ENCODE measurements at regions of chr1 and their contacts with region 1.

Region 1: DNA sequence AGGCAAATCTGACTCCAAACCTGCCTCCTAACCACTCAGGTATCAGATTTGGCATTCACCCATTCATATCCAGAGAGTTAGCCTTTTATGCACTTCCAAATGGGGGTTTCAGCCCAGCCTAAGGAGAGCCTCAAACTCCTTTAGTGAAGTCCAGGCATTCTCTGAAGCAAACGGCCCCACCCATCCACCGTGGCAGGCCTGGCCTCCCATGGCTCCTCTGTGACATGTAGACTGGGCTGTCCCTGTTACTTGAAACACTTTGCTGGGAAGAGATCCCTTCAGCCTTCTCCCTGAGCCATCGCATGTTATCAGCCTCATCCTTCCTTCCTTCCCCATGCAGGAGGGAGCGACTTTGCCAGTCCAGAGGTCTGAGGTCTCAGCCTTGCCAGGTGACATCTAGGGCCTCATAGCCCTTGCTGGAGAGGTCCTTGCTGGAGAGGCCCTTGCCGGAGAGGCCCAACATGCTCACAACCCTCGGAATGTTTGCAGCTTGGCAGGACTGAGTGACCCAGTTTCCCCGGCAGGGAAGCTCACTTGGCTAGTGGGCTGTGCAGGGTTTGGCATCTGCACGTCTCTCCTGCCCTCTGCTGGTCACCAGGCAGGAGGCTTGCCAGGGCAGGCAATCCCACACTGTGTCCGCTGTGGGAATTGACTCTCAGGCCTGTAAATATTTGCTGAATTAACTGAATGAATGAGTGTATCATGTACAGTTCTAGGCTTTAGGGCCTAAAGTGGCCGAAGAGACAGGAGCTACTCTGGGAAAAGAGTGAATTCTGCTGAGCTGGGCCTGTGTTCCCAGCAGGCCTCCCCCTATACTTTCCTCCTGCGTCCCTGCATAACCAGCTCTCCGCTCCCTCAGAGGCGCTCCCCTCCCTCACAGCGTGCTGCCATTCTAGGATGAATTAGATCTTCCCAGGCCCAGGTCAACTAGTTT is 26.7 kb upstream of the RBM15 start:
- DNase-seq: peak; percentile 19
- ATAC-seq: peak; percentile 100
- H3K4me3 ChIP-seq: no peak overlapping the region
- H3K27ac ChIP-seq: no peak overlapping the region
- H3K4me1 ChIP-seq: no peaks in the 10 kb centered on the region
- H3K27me3 ChIP-seq: no peaks in the 10 kb centered on the region
- CTCF ChIP-seq: peak; percentile 93
- EP300 ChIP-seq: no peak
- POLR2A ChIP-seq: no peak
- RAD21 ChIP-seq: peak; percentile 97

Region 2: DNA sequence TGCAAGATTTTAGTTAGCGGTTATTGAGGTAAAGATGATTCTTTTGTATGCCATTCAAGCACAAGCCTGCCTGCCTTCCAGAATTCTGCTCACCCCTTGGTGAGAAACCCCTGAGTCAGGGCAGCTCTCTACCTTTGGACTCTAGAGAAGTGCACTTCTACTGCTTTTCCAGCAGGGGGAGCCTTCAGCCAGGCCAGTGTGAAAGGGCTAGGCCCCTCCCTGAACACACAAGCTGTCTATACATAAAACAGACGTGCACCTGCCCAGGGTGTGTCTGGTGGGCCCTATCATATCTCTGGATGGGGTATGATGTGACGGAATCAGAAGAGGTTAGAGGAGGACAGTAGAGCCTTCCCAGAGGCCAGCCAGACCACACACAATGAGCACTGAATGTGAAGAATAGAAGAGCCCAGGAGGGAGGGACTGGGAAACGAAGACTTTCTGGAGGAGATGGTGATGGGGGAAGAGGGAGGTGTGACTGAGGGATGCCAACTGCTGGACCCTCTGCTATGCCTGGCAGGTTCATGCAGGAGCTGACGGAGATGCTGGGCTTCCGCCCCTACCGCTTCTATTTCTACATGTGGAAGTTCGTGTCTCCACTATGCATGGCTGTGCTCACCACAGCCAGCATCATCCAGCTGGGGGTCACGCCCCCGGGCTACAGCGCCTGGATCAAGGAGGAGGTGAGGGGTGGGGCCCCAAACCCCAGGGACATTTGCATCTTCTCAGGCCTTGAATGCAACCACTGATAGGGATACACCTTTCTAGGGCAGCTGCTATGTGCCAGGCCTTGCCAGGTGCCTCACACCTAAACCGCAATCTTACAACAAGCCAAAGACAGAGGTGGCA is 115.3 kb before region 1 on chr1:
- CTCF ChIA-PET with region 1: interaction called, 753 read pairs
- POLR2A ChIA-PET with region 1: no interaction called
- RAD21 ChIA-PET with region 1: interaction called, 51 read pairs
- SMC1A ChIA-PET with region 1: interaction called, 524 read pairs
- in situ Hi-C with region 1: loop called (anchors 5 kb)
- intact Hi-C with region 1: no loop called
- DNase-seq: no peak
- ATAC-seq: peak; percentile 98
- H3K4me3 ChIP-seq: no peak overlapping the region
- H3K27ac ChIP-seq: no peak overlapping the region
- H3K4me1 ChIP-seq: no peaks in the 10 kb centered on the region
- H3K27me3 ChIP-seq: peaks cover 0 to 2% of the 10 kb centered on the region in 2 experiments; a peak in 2 of 4 replicates
- CTCF ChIP-seq: peak; percentile 87 to 92 (median 91)
- EP300 ChIP-seq: no peak
- POLR2A ChIP-seq: no peak
- RAD21 ChIP-seq: peak; percentile 61

Region 3: DNA sequence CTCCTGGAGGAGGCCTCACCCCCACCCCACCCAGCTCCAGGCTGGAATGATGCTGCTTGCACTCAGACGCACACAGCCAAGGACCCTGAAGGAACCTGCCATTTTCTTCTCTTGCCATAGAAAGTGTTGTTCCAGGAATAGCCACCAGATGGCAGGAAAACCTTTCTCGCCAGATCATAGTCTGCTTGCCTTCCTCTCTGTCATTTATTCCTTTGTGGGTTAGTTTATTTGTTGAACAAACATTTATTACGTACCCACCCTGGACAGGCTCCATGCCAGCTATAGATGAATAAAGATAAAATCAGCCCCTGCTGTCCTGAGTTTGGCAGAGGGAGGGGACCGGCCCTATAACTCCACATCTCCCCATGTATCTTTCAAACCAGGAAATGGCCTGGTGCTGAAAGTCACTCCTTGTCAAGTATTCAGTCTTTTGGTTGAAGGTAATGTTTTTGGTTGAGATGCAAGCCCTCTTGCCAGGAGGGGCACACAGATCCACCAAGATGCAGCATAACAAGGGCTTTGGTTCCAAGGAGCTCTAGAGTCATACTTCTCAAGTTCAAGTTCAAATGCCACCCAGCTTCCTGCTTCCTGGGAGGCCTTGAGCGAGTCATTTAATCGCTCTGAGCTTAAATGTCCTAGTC is 109.3 kb before region 1 on chr1:
- CTCF ChIA-PET with region 1: interaction called, 753 read pairs
- POLR2A ChIA-PET with region 1: interaction called, 7 read pairs
- RAD21 ChIA-PET with region 1: interaction called, 319 read pairs
- SMC1A ChIA-PET with region 1: interaction called, 524 read pairs
- in situ Hi-C with region 1: loop called (anchors 5 kb)
- intact Hi-C with region 1: loop called (anchors 1 kb)
- DNase-seq: peak; percentile 17
- ATAC-seq: peak; percentile 84
- H3K4me3 ChIP-seq: no peak overlapping the region
- H3K27ac ChIP-seq: no peak overlapping the region
- H3K4me1 ChIP-seq: no peaks in the 10 kb centered on the region
- H3K27me3 ChIP-seq: peaks cover 0 to 2% of the 10 kb centered on the region in 2 experiments; a peak in 2 of 4 replicates
- CTCF ChIP-seq: peak; percentile 81 to 89 (median 81)
- EP300 ChIP-seq: no peak
- POLR2A ChIP-seq: no peak
- RAD21 ChIP-seq: peak; percentile 90

Region 4: DNA sequence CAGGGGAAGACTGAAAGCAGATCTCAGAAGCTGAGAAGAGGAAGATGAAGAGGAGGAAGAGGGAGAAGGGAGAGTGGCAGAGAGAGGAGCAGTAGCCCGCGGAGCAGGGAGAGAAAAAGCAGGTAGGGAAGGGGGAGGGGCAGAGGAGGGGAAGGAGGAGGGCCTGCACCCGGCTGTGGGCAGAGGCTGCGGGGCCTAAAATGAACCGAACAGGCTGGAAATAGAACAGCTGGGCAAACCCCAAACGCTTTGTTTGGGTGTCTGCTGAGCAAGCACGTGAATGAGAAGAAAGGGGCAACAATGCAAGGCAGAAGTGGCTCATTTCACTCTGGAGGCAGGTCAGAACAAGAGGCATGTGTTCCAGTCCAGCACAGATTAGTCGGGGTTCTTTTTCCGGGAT is 68.9 kb before region 1 on chr1:
- CTCF ChIA-PET with region 1: interaction called, 12 read pairs
- POLR2A ChIA-PET with region 1: no interaction called
- RAD21 ChIA-PET with region 1: interaction called, 3 read pairs
- SMC1A ChIA-PET with region 1: interaction called, 3 read pairs
- in situ Hi-C with region 1: no loop called
- intact Hi-C with region 1: no loop called
- DNase-seq: no peak
- ATAC-seq: peak; percentile 90
- H3K4me3 ChIP-seq: no peak overlapping the region
- H3K27ac ChIP-seq: no peak overlapping the region
- H3K4me1 ChIP-seq: peaks cover 15% of the 10 kb centered on the region; the same call in 1 of the 2 replicates
- H3K27me3 ChIP-seq: no peaks in the 10 kb centered on the region; a peak in 1 of 4 replicates
- CTCF ChIP-seq: no peak
- EP300 ChIP-seq: peak in 1 of 2 experiments; percentile 38; a peak in 1 of 4 replicates
- POLR2A ChIP-seq: no peak
- RAD21 ChIP-seq: no peak

Region 5: GRCh38 chr1:110254996-110255787 is 57.3 kb before region 1 on chr1:
- CTCF ChIA-PET with region 1: interaction called, 10 read pairs
- POLR2A ChIA-PET with region 1: no interaction called
- RAD21 ChIA-PET with region 1: no interaction called
- SMC1A ChIA-PET with region 1: interaction called, 3 read pairs
- in situ Hi-C with region 1: no loop called
- intact Hi-C with region 1: no loop called
- DNase-seq: no peak
- ATAC-seq: peak; percentile 73
- H3K4me3 ChIP-seq: no peak overlapping the region
- H3K27ac ChIP-seq: no peak overlapping the region
- H3K4me1 ChIP-seq: peaks cover 6% of the 10 kb centered on the region
- H3K27me3 ChIP-seq: no peaks in the 10 kb centered on the region
- CTCF ChIP-seq: no peak
- EP300 ChIP-seq: no peak
- POLR2A ChIP-seq: no peak
- RAD21 ChIP-seq: no peak

Region 6: DNA sequence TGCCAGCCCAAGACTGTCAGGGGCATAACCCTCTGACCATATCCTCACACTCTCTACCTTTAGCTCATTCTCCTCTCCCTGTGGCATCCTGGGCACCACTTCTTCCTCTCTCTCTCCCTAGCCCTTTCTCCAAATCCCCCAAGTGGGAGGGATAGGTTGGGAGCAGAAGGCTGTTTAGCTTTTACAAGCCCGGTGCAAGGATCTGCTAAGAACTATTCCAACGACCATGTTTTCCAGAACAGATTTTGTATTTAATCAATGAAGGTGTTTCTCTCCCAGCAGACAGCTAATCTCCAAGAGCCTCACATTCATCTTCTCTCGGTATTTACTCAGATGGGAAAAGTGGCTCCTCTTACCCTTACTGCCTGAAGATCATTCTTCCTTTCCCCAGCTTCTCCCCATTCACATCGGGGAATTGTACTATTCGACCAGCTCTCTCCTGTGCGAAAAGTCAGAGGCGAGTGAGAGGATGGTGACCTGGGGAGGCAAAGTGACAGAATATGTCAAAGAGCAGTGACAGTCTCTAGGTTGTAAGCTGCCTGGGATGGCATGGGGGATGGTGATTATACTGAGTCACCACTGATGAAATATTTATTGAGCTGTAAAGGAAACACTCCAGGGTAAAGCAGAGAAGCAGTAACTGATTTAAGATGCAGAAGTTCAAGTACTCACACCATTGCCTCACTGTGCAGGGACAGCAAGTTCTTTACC is 20.3 kb before region 1 on chr1:
- CTCF ChIA-PET with region 1: interaction called, 9 read pairs
- POLR2A ChIA-PET with region 1: no interaction called
- RAD21 ChIA-PET with region 1: interaction called, 5 read pairs
- SMC1A ChIA-PET with region 1: interaction called, 14 read pairs
- in situ Hi-C with region 1: no loop called
- intact Hi-C with region 1: no loop called
- DNase-seq: no peak
- ATAC-seq: no peak
- H3K4me3 ChIP-seq: no peak overlapping the region
- H3K27ac ChIP-seq: no peak overlapping the region
- H3K4me1 ChIP-seq: no peaks in the 10 kb centered on the region
- H3K27me3 ChIP-seq: no peaks in the 10 kb centered on the region
- CTCF ChIP-seq: no peak
- EP300 ChIP-seq: no peak
- POLR2A ChIP-seq: no peak
- RAD21 ChIP-seq: no peak

Region 7: GRCh38 chr1:110407260-110408210 is 95.1 kb after region 1 on chr1 and contains the start of gene LAMTOR5:
- CTCF ChIA-PET with region 1: interaction called, 10 read pairs
- POLR2A ChIA-PET with region 1: interaction called, 5 read pairs
- RAD21 ChIA-PET with region 1: interaction called, 5 read pairs
- SMC1A ChIA-PET with region 1: interaction called, 11 read pairs
- in situ Hi-C with region 1: no loop called
- intact Hi-C with region 1: no loop called
- DNase-seq: peak; percentile 86
- ATAC-seq: peak; percentile 94
- H3K4me3 ChIP-seq: peak within 1 kb of the TSS; percentile 99
- H3K27ac ChIP-seq: peak within 1 kb of the TSS; percentile 85
- H3K4me1 ChIP-seq: peaks cover 10% of the 10 kb centered on the region
- H3K27me3 ChIP-seq: no peaks in the 10 kb centered on the region
- CTCF ChIP-seq: peak in 2 of 3 experiments; percentile 12 to 14; a peak in 2 of 6 replicates
- EP300 ChIP-seq: peak; percentile 22 to 49; a peak in 2 of 4 replicates
- POLR2A ChIP-seq: peak; percentile 97
- RAD21 ChIP-seq: peak; percentile 35; the same call in 1 of the 2 replicates
- polyA plus RNA-seq, gene LAMTOR5: 474 to 613 TPM

Measured in GM12878 (cell line).